Activated naive CD4-positive, alpha-beta T cell treated with anti-CD3 and anti-CD28 coated beads, Interleukin-2, amount 10 ng/mL, durations not matched to agents 7 days and 5 days (primary cell): ENCODE measurements at regions of chr1 and their contacts with region 1.

Region 1: GRCh38 chr1:161225534-161226319 is at the start of gene TOMM40L:
- DNase-seq: peak; percentile 94
- H3K4me3 Mint-ChIP-seq: peak within 1 kb of the TSS; percentile 89
- H3K27ac Mint-ChIP-seq: peak within 1 kb of the TSS; percentile 89
- H3K4me1 Mint-ChIP-seq: peaks cover 45% of the 10 kb centered on the region
- H3K27me3 Mint-ChIP-seq: no peaks in the 10 kb centered on the region

Region 2: DNA sequence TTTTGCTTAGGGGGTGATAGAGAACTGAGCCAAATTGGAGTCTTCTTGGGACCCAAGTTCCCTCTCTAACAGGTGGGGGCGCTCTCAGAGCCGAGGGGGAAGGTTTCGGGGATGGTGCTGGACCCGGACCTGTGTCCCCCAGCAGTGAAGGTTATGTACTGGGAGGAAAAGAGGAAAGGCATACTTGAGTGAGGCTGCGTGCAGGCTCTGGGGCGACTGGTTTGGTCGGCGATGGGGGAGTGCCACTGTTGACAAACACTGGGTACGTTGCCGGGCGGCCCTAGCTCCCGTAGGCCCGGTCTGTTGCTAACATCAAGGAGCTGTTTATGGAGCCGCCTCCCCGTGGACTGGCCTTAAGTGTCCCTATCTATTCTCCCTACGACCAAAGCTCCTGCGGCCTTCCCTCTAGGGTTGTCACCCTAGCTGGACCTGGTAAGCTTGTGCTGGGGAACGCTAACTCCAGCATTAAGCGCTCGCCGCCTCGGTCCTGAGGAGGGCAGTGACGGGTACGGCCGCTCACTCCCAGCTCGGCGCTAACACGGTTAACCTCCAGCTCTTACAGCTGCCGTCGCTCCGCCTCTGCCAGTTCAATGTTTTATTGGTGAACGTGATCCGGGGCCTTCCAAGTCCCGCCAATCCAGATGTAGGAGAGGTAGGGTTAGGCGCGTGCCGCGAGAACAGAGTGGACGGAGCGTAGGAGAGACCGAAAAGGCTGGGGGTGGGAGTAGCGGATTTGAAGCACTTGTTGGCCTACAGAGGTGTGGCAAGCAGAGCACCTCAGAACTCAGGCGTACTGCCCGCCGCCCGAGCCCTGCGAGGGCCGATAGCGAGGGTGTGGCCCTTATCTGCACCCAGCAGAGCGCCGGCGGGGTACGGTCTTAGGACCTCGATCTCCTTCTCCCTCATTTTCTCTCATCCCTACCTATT is 59.7 kb before region 1 on chr1 and contains the start of gene PPOX:
- CTCF ChIA-PET with region 1: interaction called, 17 read pairs
- DNase-seq: peak; percentile 97
- H3K4me3 Mint-ChIP-seq: peak within 1 kb of the TSS; percentile 74
- H3K27ac Mint-ChIP-seq: peak within 1 kb of the TSS; percentile 97
- H3K4me1 Mint-ChIP-seq: peaks cover 45% of the 10 kb centered on the region
- H3K27me3 Mint-ChIP-seq: no peaks in the 10 kb centered on the region

Region 3: GRCh38 chr1:161185282-161185682 is 40.4 kb before region 1 on chr1:
- CTCF ChIA-PET with region 1: interaction called, 48 read pairs
- DNase-seq: peak; percentile 91
- H3K4me3 Mint-ChIP-seq: peak overlapping the region; percentile 59
- H3K27ac Mint-ChIP-seq: peak overlapping the region; percentile 98
- H3K4me1 Mint-ChIP-seq: peaks cover 81% of the 10 kb centered on the region
- H3K27me3 Mint-ChIP-seq: no peaks in the 10 kb centered on the region

Region 4: GRCh38 chr1:161201828-161202725 is 23.6 kb before region 1 on chr1 and contains the start of gene NDUFS2:
- CTCF ChIA-PET with region 1: interaction called, 42 read pairs
- DNase-seq: peak; percentile 99
- H3K4me3 Mint-ChIP-seq: peak within 1 kb of the TSS; percentile 94
- H3K27ac Mint-ChIP-seq: peak within 1 kb of the TSS; percentile 97
- H3K4me1 Mint-ChIP-seq: peaks cover 84% of the 10 kb centered on the region
- H3K27me3 Mint-ChIP-seq: no peaks in the 10 kb centered on the region

Region 5: DNA sequence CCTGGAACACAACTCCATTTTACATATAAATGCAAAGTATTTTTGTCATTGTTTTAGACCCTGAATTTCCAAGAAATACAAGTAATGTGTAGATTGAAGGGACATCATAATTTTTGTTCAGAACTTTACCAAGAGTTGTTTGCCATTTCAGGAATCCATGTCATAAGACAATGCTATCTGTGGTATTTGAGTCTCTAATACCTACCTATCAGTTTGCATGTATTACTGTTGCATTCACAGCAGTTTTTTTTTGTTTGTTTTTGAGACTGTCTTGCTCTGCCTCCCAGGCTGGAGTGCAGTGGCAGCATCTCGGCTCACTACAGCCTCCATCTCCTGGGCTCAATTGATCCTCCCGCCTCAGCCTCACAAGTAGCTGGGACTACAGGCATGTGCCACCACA is 66.9 kb after region 1 on chr1:
- CTCF ChIA-PET with region 1: interaction called, 82 read pairs
- DNase-seq: no peak
- H3K4me3 Mint-ChIP-seq: no peak overlapping the region
- H3K27ac Mint-ChIP-seq: no peak overlapping the region
- H3K4me1 Mint-ChIP-seq: no peaks in the 10 kb centered on the region
- H3K27me3 Mint-ChIP-seq: peaks cover 4% of the 10 kb centered on the region

Region 6: GRCh38 chr1:161382214-161383019 is 156.7 kb after region 1 on chr1:
- CTCF ChIA-PET with region 1: interaction called, 157 read pairs
- DNase-seq: no peak
- H3K4me3 Mint-ChIP-seq: no peak overlapping the region
- H3K27ac Mint-ChIP-seq: no peak overlapping the region
- H3K4me1 Mint-ChIP-seq: peaks cover 17% of the 10 kb centered on the region
- H3K27me3 Mint-ChIP-seq: no peaks in the 10 kb centered on the region